ENCODE measurements at regions of chr7 and their contacts with region 1.

Region 1: DNA sequence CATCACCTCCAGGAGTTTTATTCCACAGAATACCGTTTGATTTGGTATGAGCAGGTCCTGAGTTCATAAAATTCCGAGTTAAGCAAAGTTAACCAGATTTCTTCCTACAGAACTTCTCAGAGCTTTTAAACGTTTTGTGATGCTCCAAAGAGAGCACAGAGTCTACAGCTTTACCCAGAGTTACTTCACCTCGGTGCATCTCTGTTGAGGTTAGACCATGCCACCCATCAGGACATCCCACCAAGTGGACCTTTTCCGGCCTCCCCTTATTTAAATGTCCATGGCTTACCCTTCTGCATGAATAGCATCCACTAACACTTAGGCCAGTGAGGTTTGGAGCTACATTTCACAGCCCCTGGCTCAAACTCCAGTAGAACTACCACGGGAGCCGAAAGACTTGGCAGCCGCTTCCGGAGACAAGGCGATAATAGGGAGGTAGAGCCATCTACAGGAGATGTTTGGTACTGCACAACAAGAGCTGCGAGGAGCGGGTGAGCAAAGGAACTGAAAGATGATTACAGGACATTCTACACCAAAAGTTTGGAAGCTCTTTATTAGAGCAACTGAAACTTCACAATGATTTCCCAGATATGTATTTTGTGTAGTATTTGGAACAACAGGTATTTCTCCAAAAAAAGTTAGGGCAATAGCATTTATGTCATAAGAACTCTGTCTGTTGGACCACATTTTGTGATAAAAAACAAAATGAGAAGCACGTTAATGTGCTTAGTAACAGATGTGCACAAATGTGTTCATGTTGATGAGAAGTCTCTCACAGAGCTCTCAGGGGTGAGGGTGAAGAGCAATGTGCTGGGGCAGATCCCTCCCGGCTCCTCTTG is 174.7 kb downstream of the HERPUD2 start:
- DNase-seq: peak; percentile 59
- H3K4me3 Mint-ChIP-seq: no peak overlapping the region
- H3K27ac Mint-ChIP-seq: no peak overlapping the region
- H3K4me1 Mint-ChIP-seq: no peaks in the 10 kb centered on the region
- H3K27me3 Mint-ChIP-seq: peaks cover 21% of the 10 kb centered on the region

Region 2: GRCh38 chr7:35331730-35332678 is 188.2 kb before region 1 on chr7:
- CTCF ChIA-PET with region 1: no interaction called
- POLR2A ChIA-PET with region 1: no interaction called
- DNase-seq: no peak
- H3K4me3 Mint-ChIP-seq: no peak overlapping the region
- H3K27ac Mint-ChIP-seq: no peak overlapping the region
- H3K4me1 Mint-ChIP-seq: no peaks in the 10 kb centered on the region
- H3K27me3 Mint-ChIP-seq: no peaks in the 10 kb centered on the region

Region 3: DNA sequence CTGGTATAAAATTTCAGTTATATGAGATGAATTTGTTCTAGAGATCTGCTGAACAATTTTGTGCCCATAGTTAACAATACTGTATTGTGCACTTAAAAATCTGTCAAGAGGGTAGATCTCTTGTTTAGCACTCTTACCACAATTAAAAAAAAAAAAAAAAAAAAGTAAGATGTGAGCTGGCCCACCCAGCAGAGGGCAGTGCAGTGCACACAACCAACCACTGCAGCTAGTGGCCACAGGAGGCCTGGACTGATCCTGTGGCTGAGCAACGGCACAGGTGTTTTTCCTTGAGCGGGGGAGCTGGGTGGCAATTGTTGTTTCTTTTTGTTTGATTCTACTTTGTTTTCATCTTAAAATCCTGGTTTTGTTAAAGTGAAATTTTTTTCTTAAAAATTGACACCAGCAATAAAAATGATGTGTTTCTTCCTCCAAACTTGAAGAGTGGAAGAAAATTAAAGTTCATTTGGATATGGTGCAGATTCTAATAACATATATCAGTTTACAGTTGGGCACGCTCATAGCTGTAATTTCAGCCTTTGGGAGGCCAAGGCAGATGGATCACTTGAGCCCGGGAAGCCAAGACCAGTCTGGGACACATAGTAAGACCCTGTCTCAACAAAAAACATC is 95.2 kb before region 1 on chr7:
- CTCF ChIA-PET with region 1: interaction called, 19 read pairs
- POLR2A ChIA-PET with region 1: no interaction called
- DNase-seq: peak; percentile 60
- H3K4me3 Mint-ChIP-seq: no peak overlapping the region
- H3K27ac Mint-ChIP-seq: no peak overlapping the region
- H3K4me1 Mint-ChIP-seq: no peaks in the 10 kb centered on the region
- H3K27me3 Mint-ChIP-seq: peaks cover 26% of the 10 kb centered on the region

Region 4: GRCh38 chr7:35468621-35469020 is 51.6 kb before region 1 on chr7:
- CTCF ChIA-PET with region 1: no interaction called
- POLR2A ChIA-PET with region 1: no interaction called
- DNase-seq: no peak
- H3K4me3 Mint-ChIP-seq: no peak overlapping the region
- H3K27ac Mint-ChIP-seq: no peak overlapping the region
- H3K4me1 Mint-ChIP-seq: no peaks in the 10 kb centered on the region
- H3K27me3 Mint-ChIP-seq: peaks cover 21% of the 10 kb centered on the region

Region 5: GRCh38 chr7:35670856-35671569 is 150.8 kb after region 1 on chr7:
- CTCF ChIA-PET with region 1: no interaction called
- POLR2A ChIA-PET with region 1: no interaction called
- DNase-seq: no peak
- H3K4me3 Mint-ChIP-seq: no peak overlapping the region
- H3K27ac Mint-ChIP-seq: no peak overlapping the region
- H3K4me1 Mint-ChIP-seq: no peaks in the 10 kb centered on the region
- H3K27me3 Mint-ChIP-seq: no peaks in the 10 kb centered on the region